ENCODE measurements at regions of chr16 and their contacts with region 1.

Region 1: GRCh38 chr16:57300387-57301125 is 16.1 kb upstream of the PLLP start:
- H3K4me3 ChIP-seq: peak overlapping the region; percentile 38
- H3K27ac ChIP-seq: no peak overlapping the region
- H3K4me1 ChIP-seq: no peaks in the 10 kb centered on the region
- CTCF ChIP-seq: peak; percentile 99

Region 2: DNA sequence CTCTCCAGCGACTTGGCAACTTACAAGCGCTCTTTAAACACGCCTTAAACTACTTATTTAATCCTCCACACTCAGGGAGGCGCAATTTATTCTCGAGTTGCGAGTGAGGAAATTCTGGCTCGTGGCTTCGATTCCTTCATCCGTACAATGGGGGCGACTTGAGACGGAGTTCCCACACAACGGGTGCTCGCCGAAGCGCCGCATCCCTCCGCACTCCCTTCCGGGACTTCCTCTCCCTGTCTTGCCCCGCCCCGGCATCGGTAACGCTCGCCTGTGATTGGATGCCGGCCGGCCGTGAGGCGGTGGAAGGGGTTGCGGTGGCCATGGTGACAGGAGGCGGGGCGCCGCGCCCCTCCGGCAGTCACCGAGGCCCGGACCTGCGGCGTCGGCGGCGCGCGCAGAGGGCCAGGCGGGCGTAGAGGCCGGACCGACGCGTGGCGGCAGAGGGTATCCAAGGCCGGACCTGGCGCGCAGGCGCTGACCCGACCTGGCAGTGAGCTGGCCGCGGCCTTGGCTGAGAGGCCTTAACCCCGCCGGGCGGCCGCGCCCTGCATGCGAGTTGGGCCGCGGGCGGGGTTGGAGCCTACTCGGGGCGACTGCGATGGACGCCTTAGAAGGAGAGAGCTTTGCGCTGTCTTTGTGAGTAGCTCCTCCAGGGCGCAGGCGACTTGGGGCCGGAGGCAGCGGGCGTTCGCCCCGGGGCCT is 55.6 kb before region 1 on chr16 and contains the start of gene ARL2BP:
- CTCF ChIA-PET with region 1: interaction called, 5 read pairs
- POLR2A ChIA-PET with region 1: interaction called, 12 read pairs
- H3K4me3 ChIP-seq: peak within 1 kb of the TSS; percentile 64
- H3K27ac ChIP-seq: peak within 1 kb of the TSS; percentile 78
- H3K4me1 ChIP-seq: 0 out of 2 replicates have a peak, but pooled peaks cover 2% of the 10 kb centered on the region
- CTCF ChIP-seq: peak; percentile 84

Region 3: GRCh38 chr16:57447186-57447962 is 146.8 kb after region 1 on chr16 and contains the starts of genes CIAPIN1 and COQ9:
- CTCF ChIA-PET with region 1: interaction called, 3 read pairs
- POLR2A ChIA-PET with region 1: interaction called, 14 read pairs
- H3K4me3 ChIP-seq: peak within 1 kb of the TSS; percentile 95
- H3K27ac ChIP-seq: peak within 1 kb of the TSS; percentile 77
- H3K4me1 ChIP-seq: no peaks in the 10 kb centered on the region
- CTCF ChIP-seq: no peak